PC-3 (cell line): ENCODE measurements at regions of chr7 and their contacts with region 1.

Region 1: GRCh38 chr7:50962962-50963374 is 180.3 kb upstream of the GRB10 start:
- DNase-seq: peak; percentile 97
- ATAC-seq: peak; percentile 97
- H3K4me3 ChIP-seq: peak overlapping the region; percentile 35; the same call in 1 of the 2 replicates
- H3K27ac ChIP-seq: peak overlapping the region; percentile 88
- H3K4me1 ChIP-seq: peaks cover 19% of the 10 kb centered on the region
- H3K27me3 ChIP-seq: no peaks in the 10 kb centered on the region
- CTCF ChIP-seq: no peak

Region 2: GRCh38 chr7:50826371-50827172 is 136.4 kb before region 1 on chr7:
- CTCF ChIA-PET with region 1: no interaction called
- POLR2A ChIA-PET with region 1: no interaction called
- intact Hi-C with region 1: loop called (anchors 5 kb)
- DNase-seq: peak; percentile 96
- ATAC-seq: peak; percentile 93
- H3K4me3 ChIP-seq: no peak overlapping the region
- H3K27ac ChIP-seq: peak overlapping the region; percentile 98
- H3K4me1 ChIP-seq: peaks cover 58% of the 10 kb centered on the region
- H3K27me3 ChIP-seq: no peaks in the 10 kb centered on the region
- CTCF ChIP-seq: no peak

Region 3: DNA sequence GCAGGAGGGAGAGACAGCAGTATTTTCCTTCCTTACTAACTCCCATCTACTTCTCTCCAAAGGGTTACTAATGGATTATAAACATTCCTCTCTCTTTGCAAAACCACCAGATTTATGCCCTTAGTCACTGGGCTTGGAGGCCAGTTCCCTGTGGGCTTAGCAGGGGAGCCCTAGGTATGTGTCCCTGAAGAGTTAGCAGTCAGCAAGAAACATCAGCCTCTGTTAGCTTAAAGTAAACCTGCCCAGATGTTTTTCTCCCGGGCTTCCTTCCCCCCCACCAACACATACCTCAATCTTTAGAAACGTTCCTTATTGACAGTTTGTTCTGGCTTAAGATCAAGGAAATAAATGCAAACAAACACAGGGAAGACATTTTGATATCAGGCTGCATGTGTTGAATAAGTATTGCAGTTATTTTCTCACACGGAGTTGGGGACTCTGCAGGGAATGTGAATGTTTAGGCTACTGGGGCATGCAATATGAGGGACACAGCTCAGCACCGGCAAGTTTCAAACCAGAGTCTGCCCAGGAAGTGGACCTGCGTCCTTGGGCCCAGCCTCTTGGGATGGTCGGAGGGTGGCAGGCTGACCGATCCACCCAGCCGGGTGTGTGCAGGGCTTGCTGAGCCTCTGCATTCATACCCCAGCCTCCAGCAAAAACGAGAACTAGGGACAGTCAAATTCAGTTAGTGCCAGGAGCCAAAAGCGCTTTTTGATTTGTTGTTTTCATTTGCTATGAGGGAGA is 71.7 kb after region 1 on chr7:
- CTCF ChIA-PET with region 1: no interaction called
- POLR2A ChIA-PET with region 1: no interaction called
- intact Hi-C with region 1: loop called (anchors 5 kb)
- DNase-seq: peak; percentile 71
- ATAC-seq: peak; percentile 77
- H3K4me3 ChIP-seq: no peak overlapping the region
- H3K27ac ChIP-seq: peak overlapping the region; percentile 21; the same call in 1 of the 2 replicates
- H3K4me1 ChIP-seq: peaks cover 32% of the 10 kb centered on the region
- H3K27me3 ChIP-seq: no peaks in the 10 kb centered on the region
- CTCF ChIP-seq: no peak